Mammary epithelial cell (primary cell): ENCODE measurements at regions of chr16 and their contacts with region 1.

Region 1: GRCh38 chr16:52957199-52957598 is 95.5 kb downstream of the CHD9NB start:
- DNase-seq: no peak
- H3K4me3 ChIP-seq: no peak overlapping the region
- H3K27ac ChIP-seq: no peak overlapping the region
- H3K4me1 ChIP-seq: no peaks in the 10 kb centered on the region
- H3K27me3 ChIP-seq: no peaks in the 10 kb centered on the region
- CTCF ChIP-seq: no peak

Region 2: DNA sequence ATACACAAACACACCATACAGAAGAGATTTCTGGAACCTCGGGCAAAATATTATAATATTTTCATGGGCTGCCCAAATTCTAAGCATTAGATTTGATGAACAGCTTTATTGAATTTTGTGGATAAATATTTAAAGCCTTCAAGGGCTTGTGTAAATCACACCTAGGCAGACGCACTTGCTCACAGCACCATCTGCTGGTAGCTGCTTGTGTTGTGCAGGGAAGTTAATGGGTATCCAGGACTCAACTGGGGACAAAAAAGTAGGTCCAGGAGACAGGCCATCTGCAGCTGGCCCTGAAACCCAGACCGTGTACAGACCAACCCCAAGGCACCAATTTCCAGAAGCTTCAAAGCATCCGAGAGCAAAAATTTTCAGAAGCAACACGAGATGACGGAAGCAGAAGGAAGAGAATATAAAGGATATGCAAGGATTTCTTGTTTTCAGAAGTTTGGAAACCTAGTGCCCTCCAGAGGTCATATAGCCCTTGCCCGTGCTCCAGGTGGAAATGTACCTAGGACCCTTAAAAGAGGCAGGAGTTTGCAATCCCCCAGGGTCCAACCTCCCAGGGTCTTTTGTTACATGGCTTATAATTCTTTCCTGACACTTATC is 44.5 kb before region 1 on chr16:
- CTCF ChIA-PET with region 1: no interaction called
- dilution Hi-C with region 1: no loop called
- in situ Hi-C with region 1: no loop called
- intact Hi-C with region 1: no loop called
- DNase-seq: peak; percentile 43
- H3K4me3 ChIP-seq: no peak overlapping the region
- H3K27ac ChIP-seq: no peak overlapping the region
- H3K4me1 ChIP-seq: no peaks in the 10 kb centered on the region
- H3K27me3 ChIP-seq: no peaks in the 10 kb centered on the region
- CTCF ChIP-seq: peak; percentile 87 to 89

Region 3: DNA sequence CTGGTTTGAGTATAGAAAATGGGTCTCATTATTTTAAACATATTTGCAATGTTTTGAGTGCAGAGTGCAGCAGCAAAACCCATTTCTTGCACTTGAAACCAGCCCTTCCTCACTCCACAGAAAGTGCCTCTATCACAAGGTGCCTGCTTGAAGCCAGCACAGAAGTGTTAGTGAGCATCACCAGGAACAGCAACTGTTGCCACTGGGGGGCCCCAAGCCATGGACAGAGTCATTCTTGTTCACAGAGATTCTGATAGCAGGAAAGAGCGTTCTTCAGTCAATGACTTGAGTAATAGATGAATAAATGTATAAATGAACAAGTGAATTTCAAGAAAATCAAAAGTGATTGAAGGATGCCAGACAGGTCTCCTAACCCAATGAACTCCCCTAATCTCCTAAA is 49.9 kb after region 1 on chr16:
- CTCF ChIA-PET with region 1: no interaction called
- dilution Hi-C with region 1: loop called (anchors 5 kb)
- in situ Hi-C with region 1: no loop called
- intact Hi-C with region 1: no loop called
- DNase-seq: no peak
- H3K4me3 ChIP-seq: no peak overlapping the region
- H3K27ac ChIP-seq: no peak overlapping the region
- H3K4me1 ChIP-seq: no peaks in the 10 kb centered on the region
- H3K27me3 ChIP-seq: no peaks in the 10 kb centered on the region
- CTCF ChIP-seq: no peak

Region 4: GRCh38 chr16:53061701-53062159 is 104.5 kb after region 1 on chr16:
- CTCF ChIA-PET with region 1: no interaction called
- dilution Hi-C with region 1: no loop called
- in situ Hi-C with region 1: no loop called
- intact Hi-C with region 1: no loop called
- DNase-seq: no peak
- H3K4me3 ChIP-seq: no peak overlapping the region
- H3K27ac ChIP-seq: no peak overlapping the region
- H3K4me1 ChIP-seq: peaks cover 6% of the 10 kb centered on the region
- H3K27me3 ChIP-seq: no peaks in the 10 kb centered on the region
- CTCF ChIP-seq: no peak